ENCODE measurements at regions of chr6 and their contacts with region 1.

Region 1: DNA sequence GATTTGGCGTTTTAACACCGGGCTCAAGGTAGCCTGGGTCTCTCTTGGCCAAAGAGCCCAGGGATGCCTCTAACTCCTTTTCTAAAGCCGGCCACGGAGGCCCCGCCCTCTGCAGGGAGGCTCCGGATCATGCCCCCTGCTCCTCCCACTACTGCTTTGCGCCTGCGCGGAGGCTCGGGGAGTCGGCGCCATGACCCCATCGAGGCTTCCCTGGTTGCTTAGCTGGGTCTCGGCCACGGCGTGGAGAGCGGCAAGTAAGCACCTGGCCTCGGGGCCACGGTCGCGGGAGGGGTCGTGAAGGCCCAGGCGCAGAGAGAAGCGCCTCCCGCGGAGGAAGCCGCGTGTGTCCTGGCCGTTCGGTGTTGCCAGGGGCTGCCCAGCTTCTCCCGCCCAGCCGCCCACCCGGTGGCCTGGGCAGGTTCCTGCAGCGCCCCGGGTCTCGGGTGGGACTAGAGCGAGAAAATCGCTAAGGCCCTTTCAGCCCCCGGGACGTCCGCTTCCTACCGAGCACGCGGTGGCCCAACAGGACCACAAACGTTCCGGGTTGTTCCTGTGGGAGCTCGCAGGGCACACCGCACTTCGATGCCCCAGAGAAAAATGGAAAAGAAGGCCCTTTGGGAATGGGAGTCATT is at the start of gene SDHAF4:
- DNase-seq: peak; percentile 90 to 96 (median 93)
- ATAC-seq: peak; percentile 99
- H3K4me3 ChIP-seq: peak within 1 kb of the TSS; percentile 95
- H3K4me3 Mint-ChIP-seq: peak within 1 kb of the TSS; percentile 87
- H3K27ac ChIP-seq: peak within 1 kb of the TSS; percentile 67 to 75
- H3K27ac Mint-ChIP-seq: peak within 1 kb of the TSS; percentile 79
- H3K4me1 ChIP-seq: peaks cover 18% of the 10 kb centered on the region
- H3K4me1 Mint-ChIP-seq: peaks cover 22% of the 10 kb centered on the region
- H3K27me3 ChIP-seq: no peaks in the 10 kb centered on the region
- H3K27me3 Mint-ChIP-seq: no peaks in the 10 kb centered on the region
- CTCF ChIP-seq: no peak
- total RNA-seq, gene SDHAF4: 2.2 to 2.6 TPM

Region 2: DNA sequence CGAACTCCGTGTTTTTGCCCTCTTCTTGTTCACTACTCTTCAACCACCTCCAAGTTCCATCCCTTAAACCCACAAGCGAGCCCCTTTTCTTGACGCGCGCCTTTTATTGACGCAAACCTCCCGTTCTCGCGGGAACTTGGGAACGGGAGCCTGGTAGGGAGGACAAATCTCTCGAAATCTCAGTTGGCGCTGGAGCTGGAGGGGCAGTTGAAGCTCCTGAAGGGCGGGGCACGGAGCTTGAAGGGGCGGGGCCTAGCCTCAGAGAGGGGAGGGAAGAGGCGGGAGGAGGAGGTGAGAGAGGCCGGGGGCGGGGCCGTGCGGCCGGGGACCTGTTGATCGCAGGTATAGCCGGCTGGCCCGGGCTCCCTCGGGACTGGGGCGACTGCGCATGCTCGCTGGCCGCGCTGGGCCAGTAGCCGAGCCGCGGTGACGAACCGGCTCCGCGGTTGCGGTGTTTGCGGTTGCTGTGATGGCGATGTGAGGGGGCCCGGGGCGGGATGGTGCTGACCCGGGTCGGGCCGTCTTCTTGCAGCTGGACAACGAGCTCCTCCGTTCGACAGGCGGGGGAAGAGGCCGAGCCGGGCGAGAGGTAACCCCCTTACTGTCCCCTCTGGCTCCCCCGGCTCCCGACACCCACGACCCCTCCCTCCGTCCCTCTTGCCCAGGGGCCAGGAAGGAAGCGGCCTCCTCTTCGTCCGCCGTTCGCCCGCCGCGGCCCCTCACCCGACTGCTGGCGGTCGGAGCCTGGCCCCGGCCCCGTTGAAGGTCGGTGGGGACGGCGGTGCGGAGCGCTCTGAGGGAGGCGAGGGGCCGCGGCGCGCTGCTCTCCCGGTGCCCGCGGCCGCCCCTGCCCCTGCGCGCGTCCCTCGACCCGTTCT is 153.5 kb before region 1 on chr6 and contains the start of gene FAM135A:
- CTCF ChIA-PET with region 1: no interaction called
- POLR2A ChIA-PET with region 1: interaction called, 4 read pairs
- intact Hi-C with region 1: loop called in 1 of 2 experiments (anchors 5 kb)
- DNase-seq: peak; percentile 88 to 98 (median 91)
- ATAC-seq: peak; percentile 92
- H3K4me3 ChIP-seq: peak within 1 kb of the TSS; percentile 65
- H3K4me3 Mint-ChIP-seq: peak within 1 kb of the TSS; percentile 98
- H3K27ac ChIP-seq: peak within 1 kb of the TSS; percentile 13 to 31
- H3K27ac Mint-ChIP-seq: peak within 1 kb of the TSS; percentile 91
- H3K4me1 ChIP-seq: peaks cover 10% of the 10 kb centered on the region
- H3K4me1 Mint-ChIP-seq: peaks cover 23% of the 10 kb centered on the region
- H3K27me3 ChIP-seq: no peaks in the 10 kb centered on the region
- H3K27me3 Mint-ChIP-seq: no peaks in the 10 kb centered on the region
- CTCF ChIP-seq: no peak
- total RNA-seq, gene FAM135A: 5.6 to 6.6 TPM

Region 3: GRCh38 chr6:70538376-70538775 is 28.5 kb before region 1 on chr6:
- CTCF ChIA-PET with region 1: no interaction called
- POLR2A ChIA-PET with region 1: no interaction called
- intact Hi-C with region 1: no loop called
- DNase-seq: no peak
- ATAC-seq: no peak
- H3K4me3 ChIP-seq: no peak overlapping the region
- H3K4me3 Mint-ChIP-seq: no peak overlapping the region
- H3K27ac ChIP-seq: no peak overlapping the region
- H3K27ac Mint-ChIP-seq: no peak overlapping the region
- H3K4me1 ChIP-seq: no peaks in the 10 kb centered on the region
- H3K4me1 Mint-ChIP-seq: no peaks in the 10 kb centered on the region
- H3K27me3 ChIP-seq: no peaks in the 10 kb centered on the region
- H3K27me3 Mint-ChIP-seq: no peaks in the 10 kb centered on the region
- CTCF ChIP-seq: no peak

Region 4: GRCh38 chr6:71288228-71289001 is 721.5 kb after region 1 on chr6 and contains the start of gene OGFRL1:
- CTCF ChIA-PET with region 1: no interaction called
- POLR2A ChIA-PET with region 1: no interaction called
- intact Hi-C with region 1: loop called in 1 of 2 experiments (anchors 10 kb)
- DNase-seq: peak; percentile 35 to 88 (median 60)
- ATAC-seq: peak; percentile 89
- H3K4me3 ChIP-seq: peak within 1 kb of the TSS; percentile 79
- H3K4me3 Mint-ChIP-seq: peak within 1 kb of the TSS; percentile 92
- H3K27ac ChIP-seq: peak within 1 kb of the TSS; percentile 61 to 76
- H3K27ac Mint-ChIP-seq: peak within 1 kb of the TSS; percentile 77
- H3K4me1 ChIP-seq: peaks cover 28% of the 10 kb centered on the region
- H3K4me1 Mint-ChIP-seq: peaks cover 42% of the 10 kb centered on the region
- H3K27me3 ChIP-seq: no peaks in the 10 kb centered on the region
- H3K27me3 Mint-ChIP-seq: no peaks in the 10 kb centered on the region
- CTCF ChIP-seq: no peak
- total RNA-seq, gene OGFRL1: 9.1 TPM